GM13976 (cell line): ENCODE measurements at regions of chr12 and their contacts with region 1.

Region 1: DNA sequence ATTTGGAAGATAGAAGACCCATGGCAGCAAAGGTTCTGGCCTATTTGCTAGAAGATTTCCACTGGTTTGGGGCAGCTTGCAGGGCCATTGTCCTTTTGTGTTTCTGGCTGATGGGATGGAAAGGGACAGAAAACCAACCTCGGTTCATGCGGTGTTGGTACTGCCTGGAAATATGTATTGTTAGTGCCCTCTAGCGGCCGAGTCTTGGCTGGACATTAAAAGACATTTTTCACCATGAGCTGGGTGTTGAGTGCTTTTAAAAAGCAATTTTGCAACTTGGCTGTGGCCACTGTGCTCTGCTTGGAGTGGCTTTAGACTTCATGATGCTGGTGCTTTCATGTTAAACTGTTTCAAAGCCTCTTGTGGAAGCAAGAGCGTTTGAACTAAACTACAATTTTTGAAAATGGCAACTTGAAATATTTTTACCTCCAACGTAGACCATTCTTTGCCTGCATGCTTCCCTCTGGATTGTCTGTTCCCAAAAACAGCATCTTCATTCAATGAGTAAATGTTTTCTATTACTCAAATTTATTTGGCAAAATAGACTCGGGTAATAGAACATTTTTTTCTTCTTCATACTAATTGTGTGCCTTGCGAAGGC is 102.7 kb upstream of the TBX5 start:
- DNase-seq: peak; percentile 64
- CTCF ChIP-seq: peak; percentile 52

Region 2: DNA sequence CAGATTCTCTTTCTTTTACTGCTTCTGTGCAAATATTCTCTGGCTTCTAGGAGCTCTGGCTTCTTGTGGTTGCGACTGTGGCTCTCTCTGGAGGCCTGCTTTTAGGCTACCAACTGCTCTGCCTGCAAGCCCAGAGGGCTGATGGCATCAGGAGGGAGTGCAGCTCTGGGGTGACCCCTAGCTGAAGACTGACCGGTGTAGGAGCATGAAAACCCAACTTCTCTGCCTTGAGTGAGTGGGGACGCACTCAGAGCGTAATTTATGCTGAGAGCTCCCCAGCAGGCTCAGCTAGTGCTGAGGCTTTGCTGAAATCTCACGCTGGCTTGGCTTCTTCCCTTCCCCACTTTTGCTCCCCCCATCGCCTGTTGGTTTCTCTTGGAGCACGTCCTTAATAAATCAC is 512.6 kb before region 1 on chr12:
- in situ Hi-C with region 1: loop called (anchors 10 kb)
- DNase-seq: peak; percentile 15
- CTCF ChIP-seq: peak; percentile 14